Left colon (tissue), 2 donors: ENCODE measurements at regions of chr11 and their contacts with region 1.

Region 1: DNA sequence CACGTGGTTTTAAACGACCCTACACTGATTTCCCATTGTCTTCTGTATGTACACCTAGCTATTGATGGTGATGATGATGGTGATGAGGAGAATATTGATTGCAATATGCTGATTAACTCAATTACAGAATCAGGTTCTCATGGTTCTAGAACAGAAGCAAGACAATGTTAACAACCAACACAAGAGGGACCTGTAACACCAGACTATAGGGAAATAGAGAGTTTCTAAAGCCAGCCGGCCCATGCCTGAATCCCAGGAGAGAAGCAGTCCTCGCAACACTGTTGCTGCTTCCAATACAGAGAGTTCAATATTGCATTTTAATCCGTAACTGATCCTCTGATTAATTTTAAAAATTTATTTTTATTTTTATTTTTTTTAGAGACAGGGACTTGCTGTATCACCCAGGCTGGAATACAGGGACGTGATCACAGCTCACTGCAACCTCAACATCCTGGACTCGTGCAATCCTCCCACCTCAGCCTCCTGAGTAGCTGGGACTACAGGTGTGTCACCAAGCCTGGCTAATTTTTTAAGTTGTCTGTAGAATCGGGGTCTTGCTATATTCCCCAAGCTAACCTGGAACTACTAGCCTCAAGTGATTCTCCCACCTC is 22.2 kb upstream of the UBASH3B start:
- DNase-seq: no peak
- ATAC-seq: no peak

Region 2: DNA sequence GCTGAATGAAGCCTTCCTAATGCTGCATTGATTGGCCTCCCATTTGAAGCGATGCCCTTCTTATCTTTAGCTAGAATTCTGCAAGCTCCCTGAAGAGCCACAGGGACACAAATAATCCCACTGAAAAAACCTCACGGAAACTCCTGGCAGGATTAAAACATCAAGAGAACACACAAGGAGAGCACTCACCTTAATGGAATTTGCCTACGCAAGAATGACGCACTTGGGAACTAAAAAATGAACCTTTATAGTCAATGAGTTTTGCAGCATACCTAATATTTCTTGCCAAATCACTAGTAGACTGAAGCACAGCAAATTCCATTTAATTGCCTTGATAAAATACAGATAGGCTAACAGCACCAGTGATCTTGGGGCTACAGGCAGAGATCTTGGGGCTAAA is 210.6 kb before region 1 on chr11:
- intact Hi-C with region 1: no loop called
- DNase-seq: no peak
- ATAC-seq: no peak

Region 3: GRCh38 chr11:122781378-122782195 is 148.3 kb after region 1 on chr11:
- intact Hi-C with region 1: loop called in 1 of 2 experiments (anchors 5 kb)
- DNase-seq: peak; percentile 70 to 85
- ATAC-seq: peak; percentile 94